ENCODE measurements at regions of chr1 and their contacts with region 1.

Region 1: GRCh38 chr1:93629099-93630059 is 52.3 kb downstream of the BCAR3 start:
- DNase-seq: peak; percentile 47
- H3K4me3 Mint-ChIP-seq: no peak overlapping the region
- H3K27ac Mint-ChIP-seq: no peak overlapping the region
- H3K4me1 Mint-ChIP-seq: peaks cover 11% of the 10 kb centered on the region
- H3K27me3 Mint-ChIP-seq: no peaks in the 10 kb centered on the region

Region 2: GRCh38 chr1:93597709-93598108 is 31.7 kb before region 1 on chr1:
- CTCF ChIA-PET with region 1: no interaction called
- POLR2A ChIA-PET with region 1: no interaction called
- DNase-seq: no peak
- H3K4me3 Mint-ChIP-seq: no peak overlapping the region
- H3K27ac Mint-ChIP-seq: no peak overlapping the region
- H3K4me1 Mint-ChIP-seq: no peaks in the 10 kb centered on the region
- H3K27me3 Mint-ChIP-seq: peaks cover 14% of the 10 kb centered on the region

Region 3: DNA sequence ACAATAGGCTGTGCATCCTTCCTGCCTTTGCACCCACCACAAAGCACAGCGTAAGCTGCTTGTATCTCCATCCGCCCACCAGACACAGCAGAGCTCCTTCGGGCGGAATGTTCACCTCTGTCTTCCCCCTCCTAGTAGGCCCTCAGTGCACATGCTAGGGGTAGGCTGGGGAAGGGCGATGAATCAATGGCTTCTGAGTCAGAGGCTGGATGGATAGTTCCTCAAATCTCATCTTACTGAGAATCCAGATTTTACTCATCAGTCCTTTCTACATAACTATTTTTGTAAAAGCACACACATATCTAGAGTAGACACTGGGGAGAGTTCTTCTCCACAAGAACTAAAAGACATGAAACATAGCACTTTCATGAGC is 21.6 kb before region 1 on chr1:
- CTCF ChIA-PET with region 1: interaction called, 11 read pairs
- POLR2A ChIA-PET with region 1: no interaction called
- DNase-seq: peak; percentile 32
- H3K4me3 Mint-ChIP-seq: no peak overlapping the region
- H3K27ac Mint-ChIP-seq: no peak overlapping the region
- H3K4me1 Mint-ChIP-seq: peaks cover 37% of the 10 kb centered on the region
- H3K27me3 Mint-ChIP-seq: peaks cover 38% of the 10 kb centered on the region

Region 4: DNA sequence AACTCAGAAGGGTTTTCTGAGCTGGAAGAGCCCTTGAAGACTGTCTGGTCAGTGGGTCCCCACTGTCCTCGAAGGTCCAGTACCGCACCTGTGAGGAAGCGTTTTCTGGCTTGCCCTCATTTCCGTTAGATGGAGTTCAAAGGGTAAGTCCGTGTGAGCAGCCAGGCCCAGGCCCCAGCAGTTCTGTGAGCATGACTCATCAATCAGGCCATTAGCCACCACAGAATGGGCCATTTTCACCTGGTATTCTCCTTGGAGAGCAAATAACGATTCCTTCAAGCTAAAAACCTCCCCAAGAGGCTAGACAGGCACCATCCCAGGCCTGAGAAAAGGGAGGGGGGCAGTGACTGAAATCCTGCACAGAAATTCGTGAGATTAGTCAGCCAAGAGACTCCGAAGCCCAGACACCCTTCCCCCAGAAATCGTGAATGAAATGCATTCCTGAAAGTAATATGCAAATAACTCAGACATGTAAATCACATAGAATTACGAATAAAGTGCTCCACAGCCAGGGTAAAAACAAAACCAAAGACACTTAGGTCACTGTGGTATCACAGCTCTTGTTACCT is 13.7 kb before region 1 on chr1:
- CTCF ChIA-PET with region 1: interaction called, 10 read pairs
- POLR2A ChIA-PET with region 1: no interaction called
- DNase-seq: peak; percentile 41
- H3K4me3 Mint-ChIP-seq: no peak overlapping the region
- H3K27ac Mint-ChIP-seq: peak overlapping the region; percentile 44
- H3K4me1 Mint-ChIP-seq: peaks cover 22% of the 10 kb centered on the region
- H3K27me3 Mint-ChIP-seq: peaks cover 34% of the 10 kb centered on the region

Region 5: GRCh38 chr1:93676424-93676823 is 47.0 kb after region 1 on chr1:
- CTCF ChIA-PET with region 1: no interaction called
- POLR2A ChIA-PET with region 1: no interaction called
- DNase-seq: no peak
- H3K4me3 Mint-ChIP-seq: no peak overlapping the region
- H3K27ac Mint-ChIP-seq: no peak overlapping the region
- H3K4me1 Mint-ChIP-seq: peaks cover 18% of the 10 kb centered on the region
- H3K27me3 Mint-ChIP-seq: peaks cover 42% of the 10 kb centered on the region

Region 6: DNA sequence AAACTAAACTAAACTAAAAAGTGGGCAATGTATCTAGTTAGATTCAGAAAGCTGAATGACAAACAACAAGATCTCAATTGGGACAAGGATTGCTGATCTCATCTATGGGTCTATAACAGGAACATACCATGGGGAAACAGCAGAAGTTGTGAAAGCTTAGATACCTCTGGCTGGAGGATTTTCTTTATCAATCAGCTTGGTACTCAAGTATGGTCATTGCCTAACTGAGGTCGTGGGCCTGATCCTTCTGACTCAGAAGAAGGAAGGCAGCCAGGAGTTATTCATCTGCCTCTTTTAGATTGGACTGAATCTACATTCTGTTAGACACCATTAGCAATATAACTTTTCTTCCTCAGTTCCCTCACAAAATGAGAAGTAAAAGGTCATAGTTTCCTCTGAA is 209.9 kb after region 1 on chr1:
- CTCF ChIA-PET with region 1: interaction called, 118 read pairs
- POLR2A ChIA-PET with region 1: interaction called, 3 read pairs
- DNase-seq: no peak
- H3K4me3 Mint-ChIP-seq: no peak overlapping the region
- H3K27ac Mint-ChIP-seq: no peak overlapping the region
- H3K4me1 Mint-ChIP-seq: peaks cover 2% of the 10 kb centered on the region
- H3K27me3 Mint-ChIP-seq: peaks cover 8% of the 10 kb centered on the region